Transverse colon (tissue), 4 donors: ENCODE measurements at regions of chr6 and their contacts with region 1.

Region 1: DNA sequence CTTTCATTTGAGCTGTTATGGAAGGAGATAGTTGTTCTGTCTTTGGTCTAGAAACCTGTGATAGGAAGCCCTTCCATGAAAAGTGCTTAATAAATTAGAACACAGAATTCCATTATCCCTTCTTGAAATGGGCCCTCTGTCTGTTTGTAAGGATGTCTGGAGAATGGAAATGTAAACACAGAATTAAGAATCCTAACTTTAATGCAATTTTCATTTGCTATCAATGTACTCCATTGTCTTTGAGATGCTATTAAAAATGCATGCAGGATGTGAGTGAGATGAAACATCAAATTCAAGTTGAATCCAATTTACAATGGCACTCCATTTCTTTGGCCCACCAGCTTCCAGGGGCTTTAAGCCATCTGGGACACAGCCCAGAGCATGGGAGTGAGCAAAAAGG is 13.9 kb upstream of the AARS2 start:
- DNase-seq: no peak
- H3K4me3 ChIP-seq: no peak overlapping the region
- H3K27ac ChIP-seq: no peak overlapping the region
- H3K4me1 ChIP-seq: no peaks in the 10 kb centered on the region
- H3K27me3 ChIP-seq: peaks cover 44% of the 10 kb centered on the region
- CTCF ChIP-seq: no peak
- EP300 ChIP-seq: no peak
- POLR2A ChIP-seq: no peak

Region 2: GRCh38 chr6:44297063-44298038 is 29.7 kb before region 1 on chr6:
- in situ Hi-C with region 1: no loop called
- intact Hi-C with region 1: loop called (anchors 1 kb)
- DNase-seq: peak; percentile 25
- H3K4me3 ChIP-seq: peak overlapping the region; percentile 25 to 64 (median 33)
- H3K27ac ChIP-seq: no peak overlapping the region
- H3K4me1 ChIP-seq: peaks cover 6 to 16% (median 14%) of the 10 kb centered on the region in 4 donors
- H3K27me3 ChIP-seq: peaks cover 62% of the 10 kb centered on the region
- CTCF ChIP-seq: no peak
- EP300 ChIP-seq: no peak
- POLR2A ChIP-seq: peak; percentile 10